ENCODE measurements at regions of chr1 and their contacts with region 1.

Region 1: DNA sequence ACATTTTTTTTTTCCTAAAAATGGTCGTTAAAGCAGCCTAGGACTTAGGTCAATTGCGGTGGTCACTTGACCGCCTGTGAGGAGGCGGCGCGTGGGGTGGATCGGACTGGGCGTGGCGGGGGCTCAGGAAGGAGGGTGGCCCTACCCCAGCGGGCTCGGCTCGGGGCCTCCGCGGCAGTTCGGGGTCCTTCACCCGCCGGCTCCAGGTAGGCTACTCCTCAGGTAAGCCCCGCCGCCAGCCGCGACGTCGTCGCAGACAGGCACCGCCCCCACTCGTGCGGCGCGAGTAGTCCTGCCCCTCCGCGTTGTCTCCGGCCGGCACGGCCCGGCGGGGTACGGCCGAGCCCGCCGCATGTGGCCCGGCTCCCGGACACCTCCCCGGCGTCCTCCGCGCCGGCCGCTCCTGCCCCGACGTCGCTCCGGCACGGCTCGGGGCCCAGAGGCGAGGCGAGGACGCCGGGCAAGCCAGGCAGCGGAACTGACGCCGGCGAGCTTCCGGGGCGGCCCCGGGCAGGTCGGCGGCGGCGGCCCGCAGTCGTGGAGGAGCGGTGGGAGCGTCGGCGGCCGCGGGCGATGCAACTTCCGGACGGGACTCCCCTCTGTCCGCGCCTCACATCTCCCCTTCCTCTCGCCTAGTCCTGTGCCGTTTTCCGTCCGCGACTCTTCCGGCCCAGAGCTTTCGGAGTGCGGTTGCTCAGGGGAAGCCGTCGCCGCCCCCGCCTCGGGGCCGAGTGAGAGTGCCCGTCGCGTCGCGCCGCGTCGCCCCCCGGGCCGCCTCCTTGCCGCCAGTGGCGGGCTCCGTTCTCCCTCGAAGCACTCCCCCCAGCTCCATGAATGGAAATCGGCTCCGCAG is at the start of gene AGO3:
- DNase-seq: peak; percentile 69 to 88
- H3K4me3 ChIP-seq: peak within 1 kb of the TSS; percentile 87
- H3K27ac ChIP-seq: peak within 1 kb of the TSS; percentile 90
- H3K4me1 ChIP-seq: peaks cover 30% of the 10 kb centered on the region
- H3K27me3 ChIP-seq: no peaks in the 10 kb centered on the region
- CTCF ChIP-seq: no peak
- total RNA-seq, gene AGO3: 47.5 and 50.1 TPM in 2 replicates

Region 2: DNA sequence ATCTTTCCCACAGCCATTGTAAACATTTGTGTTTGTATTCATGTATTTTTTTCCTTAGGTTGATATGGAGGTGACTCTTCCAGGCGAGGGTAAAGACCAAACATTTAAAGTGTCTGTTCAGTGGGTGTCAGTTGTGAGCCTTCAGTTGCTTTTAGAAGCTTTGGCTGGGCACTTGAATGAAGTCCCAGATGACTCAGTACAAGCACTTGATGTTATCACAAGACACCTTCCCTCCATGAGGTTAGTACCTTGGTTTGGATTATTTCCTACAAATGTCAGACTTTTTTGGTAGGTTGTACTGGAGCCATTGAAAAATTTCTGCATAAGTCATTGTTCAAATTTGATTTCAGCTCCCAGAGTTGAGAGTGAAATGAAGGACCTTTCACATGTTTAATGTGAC is 105.6 kb before region 1 on chr1:
- CTCF ChIA-PET with region 1: no interaction called
- POLR2A ChIA-PET with region 1: no interaction called
- intact Hi-C with region 1: no loop called
- DNase-seq: no peak
- H3K4me3 ChIP-seq: no peak overlapping the region
- H3K27ac ChIP-seq: no peak overlapping the region
- H3K4me1 ChIP-seq: no peaks in the 10 kb centered on the region
- H3K27me3 ChIP-seq: no peaks in the 10 kb centered on the region
- CTCF ChIP-seq: no peak

Region 3: GRCh38 chr1:35882945-35883634 is 47.7 kb before region 1 on chr1 and contains the start of gene AGO1:
- CTCF ChIA-PET with region 1: no interaction called
- POLR2A ChIA-PET with region 1: interaction called, 9 read pairs
- intact Hi-C with region 1: loop called (anchors 2 kb)
- DNase-seq: peak; percentile 74 to 98
- H3K4me3 ChIP-seq: peak within 1 kb of the TSS; percentile 100
- H3K27ac ChIP-seq: no peak within 1 kb of the TSS
- H3K4me1 ChIP-seq: peaks cover 7% of the 10 kb centered on the region
- H3K27me3 ChIP-seq: no peaks in the 10 kb centered on the region
- CTCF ChIP-seq: peak; percentile 81
- total RNA-seq, gene AGO1: 47.9 and 66.0 TPM in 2 replicates

Region 4: DNA sequence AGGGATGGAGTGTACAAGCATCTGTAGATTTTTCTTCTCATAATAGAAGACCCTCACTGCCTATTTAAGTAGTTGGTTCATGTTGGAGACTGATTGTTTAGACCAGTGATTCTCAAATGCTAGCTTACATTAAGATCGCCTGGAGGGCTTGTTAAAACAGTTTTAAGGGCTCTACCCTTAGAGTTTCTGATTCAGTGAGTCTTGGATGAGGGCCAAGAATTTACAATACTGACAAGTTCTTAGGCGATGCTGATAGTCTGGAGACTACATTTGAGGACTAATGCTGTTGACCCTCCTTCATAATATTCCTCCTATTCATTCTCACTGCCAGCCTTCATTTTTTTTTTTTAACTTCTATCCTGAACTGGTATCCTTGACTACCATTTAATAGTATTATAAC is 15.1 kb before region 1 on chr1:
- CTCF ChIA-PET with region 1: no interaction called
- POLR2A ChIA-PET with region 1: no interaction called
- intact Hi-C with region 1: no loop called
- DNase-seq: no peak
- H3K4me3 ChIP-seq: no peak overlapping the region
- H3K27ac ChIP-seq: no peak overlapping the region
- H3K4me1 ChIP-seq: no peaks in the 10 kb centered on the region
- H3K27me3 ChIP-seq: no peaks in the 10 kb centered on the region
- CTCF ChIP-seq: no peak

Region 5: GRCh38 chr1:36023098-36023769 is 92.4 kb after region 1 on chr1:
- CTCF ChIA-PET with region 1: interaction called, 16 read pairs
- POLR2A ChIA-PET with region 1: no interaction called
- intact Hi-C with region 1: no loop called
- DNase-seq: no peak
- H3K4me3 ChIP-seq: no peak overlapping the region
- H3K27ac ChIP-seq: no peak overlapping the region
- H3K4me1 ChIP-seq: peaks cover 26% of the 10 kb centered on the region
- H3K27me3 ChIP-seq: no peaks in the 10 kb centered on the region
- CTCF ChIP-seq: no peak

Region 6: DNA sequence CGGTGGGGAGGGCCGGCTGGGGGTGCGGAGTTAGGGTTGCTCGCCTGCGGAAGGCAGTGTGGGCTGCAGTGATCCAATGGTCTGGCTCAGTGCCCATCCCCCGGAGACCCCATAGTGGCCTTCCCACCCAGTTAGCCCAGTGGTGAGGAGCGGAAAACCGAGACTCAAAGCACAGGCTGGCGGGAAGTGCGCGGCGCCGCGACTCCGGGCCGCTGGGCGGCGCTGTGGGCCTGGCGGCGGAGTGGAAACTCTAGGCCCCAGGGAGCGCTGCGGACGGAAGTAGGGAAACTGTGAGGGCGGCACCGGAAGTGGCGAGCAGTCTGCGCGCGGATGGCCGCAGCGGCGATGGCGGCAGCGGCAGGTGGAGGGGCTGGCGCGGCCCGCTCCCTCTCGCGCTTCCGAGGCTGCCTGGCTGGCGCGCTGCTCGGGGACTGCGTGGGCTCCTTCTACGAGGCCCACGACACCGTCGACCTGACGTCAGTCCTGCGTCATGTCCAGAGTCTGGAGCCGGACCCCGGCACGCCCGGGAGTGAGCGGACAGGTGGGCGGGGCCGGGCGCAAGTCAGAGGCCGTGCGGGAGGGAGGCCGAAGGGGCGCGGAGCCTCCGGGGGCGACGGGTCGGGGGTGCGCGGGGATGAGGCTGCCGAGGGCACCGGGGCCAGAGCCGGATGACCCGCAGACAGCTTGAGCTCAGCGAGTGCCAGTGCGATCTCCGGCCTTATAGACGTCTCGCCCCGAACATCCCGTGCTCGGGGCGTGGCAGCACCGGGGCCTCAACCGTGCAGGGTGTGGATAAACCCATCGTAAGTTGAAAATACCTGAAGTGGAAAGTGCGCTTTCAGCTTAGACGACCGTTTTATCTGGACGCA is 158.0 kb after region 1 on chr1 and contains the start of gene ADPRS:
- CTCF ChIA-PET with region 1: no interaction called
- POLR2A ChIA-PET with region 1: no interaction called
- intact Hi-C with region 1: loop called (anchors 1 kb)
- DNase-seq: peak; percentile 74 to 89
- H3K4me3 ChIP-seq: peak within 1 kb of the TSS; percentile 97
- H3K27ac ChIP-seq: peak within 1 kb of the TSS; percentile 57
- H3K4me1 ChIP-seq: peaks cover 6% of the 10 kb centered on the region
- H3K27me3 ChIP-seq: no peaks in the 10 kb centered on the region
- CTCF ChIP-seq: peak; percentile 93
- total RNA-seq, gene ADPRS: 30.0 and 43.1 TPM in 2 replicates